ENCODE measurements at regions of chr11 and their contacts with region 1.

Region 1: GRCh38 chr11:19076744-19077589 is 16.4 kb upstream of the MRGPRX2 start:
- DNase-seq: peak; percentile 13 to 64 (median 43)
- ATAC-seq: peak; percentile 86
- H3K4me3 ChIP-seq: no peak overlapping the region
- H3K4me3 Mint-ChIP-seq: no peak overlapping the region
- H3K27ac ChIP-seq: no peak overlapping the region
- H3K27ac Mint-ChIP-seq: peak overlapping the region in 1 of 9 donors; percentile 6
- H3K4me1 ChIP-seq: no peaks in the 10 kb centered on the region
- H3K4me1 Mint-ChIP-seq: peaks cover 0 to 3% (median 0%) of the 10 kb centered on the region in 7 donors
- H3K27me3 ChIP-seq: no peaks in the 10 kb centered on the region
- H3K27me3 Mint-ChIP-seq: peaks cover 0 to 14% (median 6%) of the 10 kb centered on the region in 5 donors

Region 2: DNA sequence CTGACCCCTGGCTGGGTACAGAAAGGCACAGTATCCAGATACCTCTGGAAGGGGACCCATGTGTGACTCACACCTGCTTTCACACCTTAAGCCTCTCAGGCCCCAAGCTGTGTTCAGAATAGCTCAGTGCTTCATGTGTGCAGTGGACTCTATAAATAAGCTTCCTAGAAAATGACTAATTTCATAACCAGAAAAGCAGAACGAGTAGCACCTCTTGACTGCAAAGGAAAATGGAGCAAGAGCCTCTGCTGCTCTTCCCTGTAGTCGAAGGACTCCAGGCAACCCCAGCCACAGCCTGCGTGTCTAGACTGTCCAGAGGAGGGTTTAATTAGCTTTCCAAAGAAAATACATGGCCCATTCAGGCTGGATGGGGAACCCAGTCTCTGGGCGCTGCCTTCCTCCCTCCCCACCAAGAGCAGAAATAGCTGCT is 308.5 kb before region 1 on chr11:
- CTCF ChIA-PET with region 1: no interaction called
- POLR2A ChIA-PET with region 1: no interaction called
- intact Hi-C with region 1: no loop called
- DNase-seq: no peak
- ATAC-seq: no peak
- H3K4me3 ChIP-seq: no peak overlapping the region
- H3K4me3 Mint-ChIP-seq: no peak overlapping the region
- H3K27ac ChIP-seq: no peak overlapping the region
- H3K27ac Mint-ChIP-seq: no peak overlapping the region
- H3K4me1 ChIP-seq: no peaks in the 10 kb centered on the region
- H3K4me1 Mint-ChIP-seq: peaks cover 0 to 28% (median 0%) of the 10 kb centered on the region in 7 donors
- H3K27me3 ChIP-seq: no peaks in the 10 kb centered on the region
- H3K27me3 Mint-ChIP-seq: peaks cover 4 to 27% (median 16%) of the 10 kb centered on the region in 5 donors

Region 3: GRCh38 chr11:19087658-19088057 is 10.7 kb after region 1 on chr11:
- CTCF ChIA-PET with region 1: interaction called, 10 read pairs
- POLR2A ChIA-PET with region 1: no interaction called
- intact Hi-C with region 1: no loop called
- DNase-seq: no peak
- ATAC-seq: no peak
- H3K4me3 ChIP-seq: no peak overlapping the region
- H3K4me3 Mint-ChIP-seq: no peak overlapping the region
- H3K27ac ChIP-seq: no peak overlapping the region
- H3K27ac Mint-ChIP-seq: no peak overlapping the region
- H3K4me1 ChIP-seq: no peaks in the 10 kb centered on the region
- H3K4me1 Mint-ChIP-seq: peaks cover 0 to 2% (median 0%) of the 10 kb centered on the region in 7 donors
- H3K27me3 ChIP-seq: no peaks in the 10 kb centered on the region
- H3K27me3 Mint-ChIP-seq: peaks cover 16 to 32% (median 28%) of the 10 kb centered on the region in 5 donors

Region 4: DNA sequence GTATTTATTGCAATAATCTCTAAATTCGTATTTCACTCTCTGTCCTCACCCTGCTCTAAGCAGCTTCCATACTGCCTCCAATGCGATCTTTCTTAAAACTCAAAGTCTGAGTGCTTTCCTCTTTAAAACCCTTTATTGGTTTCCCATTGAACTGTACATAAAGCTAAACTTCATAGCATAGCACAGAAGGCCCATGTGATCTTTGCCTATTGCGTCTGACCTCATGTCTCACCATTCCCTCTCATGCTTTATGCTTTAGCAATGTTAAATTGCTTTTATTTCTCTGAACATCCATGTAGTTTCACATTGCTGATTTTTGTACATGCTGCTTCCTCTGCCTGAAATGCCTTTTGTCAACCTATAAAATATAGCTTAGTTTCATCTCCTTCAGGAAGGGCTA is 68.4 kb after region 1 on chr11:
- CTCF ChIA-PET with region 1: no interaction called
- POLR2A ChIA-PET with region 1: no interaction called
- intact Hi-C with region 1: no loop called
- DNase-seq: no peak
- ATAC-seq: no peak
- H3K4me3 ChIP-seq: no peak overlapping the region
- H3K4me3 Mint-ChIP-seq: no peak overlapping the region
- H3K27ac ChIP-seq: no peak overlapping the region
- H3K27ac Mint-ChIP-seq: no peak overlapping the region
- H3K4me1 ChIP-seq: no peaks in the 10 kb centered on the region
- H3K4me1 Mint-ChIP-seq: peaks cover 0 to 4% (median 0%) of the 10 kb centered on the region in 7 donors
- H3K27me3 ChIP-seq: no peaks in the 10 kb centered on the region
- H3K27me3 Mint-ChIP-seq: no peaks in the 10 kb centered on the region

Region 5: DNA sequence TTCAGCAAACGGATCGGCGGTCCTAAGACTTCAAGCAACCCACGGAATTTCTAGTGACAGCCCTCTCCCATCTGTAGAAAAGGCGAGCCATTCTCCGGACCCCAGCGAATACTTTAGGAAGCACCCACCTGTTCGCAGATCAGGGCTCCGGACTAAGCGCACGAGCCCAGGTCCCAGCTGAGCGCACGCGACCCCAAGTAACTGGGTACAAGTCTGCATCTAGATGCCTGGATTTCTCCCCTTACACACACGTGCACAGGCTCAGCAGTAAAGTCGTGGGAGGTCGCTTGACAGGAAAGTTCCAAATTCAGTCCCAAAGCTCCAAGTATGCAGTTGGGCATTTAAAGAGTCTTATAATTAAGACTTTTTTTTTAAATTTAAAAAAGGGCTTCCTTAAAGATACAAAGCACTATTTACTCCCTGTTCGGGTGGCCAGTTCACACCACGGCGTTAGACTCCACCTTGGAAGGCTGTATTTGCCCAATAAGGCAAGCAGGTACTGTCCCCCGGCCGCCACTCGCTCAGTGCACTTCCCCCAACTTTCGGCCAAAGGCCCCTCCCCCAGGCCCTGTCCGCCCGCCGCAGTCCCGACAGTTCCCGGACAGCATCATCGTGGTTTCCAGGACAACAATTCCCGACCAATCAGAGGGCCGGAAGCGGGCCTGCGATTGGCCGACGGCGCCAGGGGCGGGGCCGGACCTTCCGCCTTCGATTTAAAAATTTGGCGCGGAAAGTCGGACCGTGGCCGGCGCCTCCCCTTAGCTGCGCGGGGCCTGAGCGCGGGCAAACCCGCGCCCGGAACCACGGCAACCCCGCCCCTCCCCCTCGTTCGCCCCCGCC is 163.7 kb after region 1 on chr11 and contains the start of gene E2F8:
- CTCF ChIA-PET with region 1: no interaction called
- POLR2A ChIA-PET with region 1: no interaction called
- intact Hi-C with region 1: loop called in 1 of 2 experiments (anchors 5 kb)
- DNase-seq: peak; percentile 42 to 95 (median 62)
- ATAC-seq: peak; percentile 86
- H3K4me3 ChIP-seq: peak within 1 kb of the TSS; percentile 75
- H3K4me3 Mint-ChIP-seq: peak within 1 kb of the TSS; percentile 73 to 97 (median 85)
- H3K27ac ChIP-seq: no peak within 1 kb of the TSS
- H3K27ac Mint-ChIP-seq: peak within 1 kb of the TSS in 2 of 9 donors; percentile 41 to 85
- H3K4me1 ChIP-seq: peaks cover 12 to 13% of the 10 kb centered on the region in 2 donors
- H3K4me1 Mint-ChIP-seq: peaks cover 8 to 49% (median 22%) of the 10 kb centered on the region in 7 donors
- H3K27me3 ChIP-seq: peaks cover 8 to 25% of the 10 kb centered on the region in 2 donors
- H3K27me3 Mint-ChIP-seq: peaks cover 6 to 43% (median 35%) of the 10 kb centered on the region in 5 donors
- total RNA-seq, gene E2F8: 0.17 to 25.4 TPM in 2 of 5 experiments, not detected in the others

Region 6: DNA sequence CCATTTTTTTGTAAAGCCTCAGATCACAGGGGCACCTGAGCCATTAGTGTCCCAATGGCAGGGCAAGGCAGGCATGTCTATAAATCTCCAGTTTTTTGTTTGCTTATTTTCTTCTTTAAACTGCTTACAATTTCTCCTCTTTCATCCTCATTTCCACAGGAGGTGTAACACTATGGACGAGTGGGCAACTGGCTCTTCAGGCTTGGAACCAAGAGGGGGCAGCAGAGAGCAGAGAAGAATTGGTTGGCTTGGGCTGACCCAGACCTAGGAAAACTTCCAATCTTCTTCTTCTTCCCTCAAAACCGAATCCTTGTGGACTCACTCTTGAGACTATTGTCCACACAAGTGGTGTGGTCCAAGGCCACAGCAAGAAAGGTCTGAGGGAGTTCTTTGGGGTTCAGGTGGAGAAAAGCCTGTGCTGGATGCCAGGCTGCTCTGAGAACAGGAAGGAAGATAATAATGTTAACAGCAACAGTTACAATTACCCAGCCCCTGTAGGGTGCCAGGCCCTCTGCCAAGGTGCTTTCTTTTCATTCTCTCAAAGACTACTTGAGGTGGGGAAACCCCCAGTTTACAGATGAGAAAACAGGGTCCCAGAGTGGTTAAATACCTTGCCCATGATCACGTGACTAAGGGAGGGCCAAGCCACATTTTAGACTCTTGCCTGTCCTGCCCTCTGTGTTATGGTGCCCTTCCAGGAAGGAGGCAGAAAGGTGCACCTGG is 234.5 kb after region 1 on chr11:
- CTCF ChIA-PET with region 1: no interaction called
- POLR2A ChIA-PET with region 1: no interaction called
- intact Hi-C with region 1: loop called in 1 of 2 experiments (anchors 5 kb)
- DNase-seq: peak in 2 of 9 donors; percentile 8 to 39
- ATAC-seq: peak; percentile 67
- H3K4me3 ChIP-seq: no peak overlapping the region
- H3K4me3 Mint-ChIP-seq: no peak overlapping the region
- H3K27ac ChIP-seq: no peak overlapping the region
- H3K27ac Mint-ChIP-seq: no peak overlapping the region
- H3K4me1 ChIP-seq: no peaks in the 10 kb centered on the region
- H3K4me1 Mint-ChIP-seq: peaks cover 0 to 3% (median 0%) of the 10 kb centered on the region in 7 donors
- H3K27me3 ChIP-seq: no peaks in the 10 kb centered on the region
- H3K27me3 Mint-ChIP-seq: peaks cover 0 to 8% (median 0%) of the 10 kb centered on the region in 5 donors

Region 7: GRCh38 chr11:20070459-20070858 is 993.5 kb after region 1 on chr11:
- CTCF ChIA-PET with region 1: no interaction called
- POLR2A ChIA-PET with region 1: no interaction called
- intact Hi-C with region 1: no loop called
- DNase-seq: no peak
- ATAC-seq: no peak
- H3K4me3 ChIP-seq: no peak overlapping the region
- H3K4me3 Mint-ChIP-seq: no peak overlapping the region
- H3K27ac ChIP-seq: no peak overlapping the region
- H3K27ac Mint-ChIP-seq: no peak overlapping the region
- H3K4me1 ChIP-seq: no peaks in the 10 kb centered on the region
- H3K4me1 Mint-ChIP-seq: no peaks in the 10 kb centered on the region
- H3K27me3 ChIP-seq: no peaks in the 10 kb centered on the region
- H3K27me3 Mint-ChIP-seq: peaks cover 9 to 19% (median 15%) of the 10 kb centered on the region in 5 donors